ENCODE measurements at regions of chr7 and their contacts with region 1.

Region 1: GRCh38 chr7:11193131-11193811 is 219.6 kb downstream of the PHF14 start:
- DNase-seq: no peak
- H3K4me3 Mint-ChIP-seq: peak overlapping the region; percentile 81
- H3K27ac Mint-ChIP-seq: peak overlapping the region; percentile 77
- H3K4me1 Mint-ChIP-seq: peaks cover 29% of the 10 kb centered on the region
- H3K27me3 Mint-ChIP-seq: peaks cover 2% of the 10 kb centered on the region

Region 2: GRCh38 chr7:10939911-10940703 is 253.2 kb before region 1 on chr7:
- intact Hi-C with region 1: loop called (anchors 5 kb)
- DNase-seq: peak; percentile 82
- H3K4me3 Mint-ChIP-seq: no peak overlapping the region
- H3K27ac Mint-ChIP-seq: no peak overlapping the region
- H3K4me1 Mint-ChIP-seq: peaks cover 14% of the 10 kb centered on the region
- H3K27me3 Mint-ChIP-seq: no peaks in the 10 kb centered on the region

Region 3: GRCh38 chr7:11120068-11120664 is 73.1 kb before region 1 on chr7:
- intact Hi-C with region 1: loop called (anchors 2 kb)
- DNase-seq: no peak
- H3K4me3 Mint-ChIP-seq: peak overlapping the region; percentile 37
- H3K27ac Mint-ChIP-seq: peak overlapping the region; percentile 79
- H3K4me1 Mint-ChIP-seq: peaks cover 40% of the 10 kb centered on the region
- H3K27me3 Mint-ChIP-seq: no peaks in the 10 kb centered on the region

Region 4: GRCh38 chr7:11130012-11130411 is 63.3 kb before region 1 on chr7:
- intact Hi-C with region 1: loop called (anchors 2 kb)
- DNase-seq: no peak
- H3K4me3 Mint-ChIP-seq: no peak overlapping the region
- H3K27ac Mint-ChIP-seq: peak overlapping the region; percentile 72
- H3K4me1 Mint-ChIP-seq: peaks cover 56% of the 10 kb centered on the region
- H3K27me3 Mint-ChIP-seq: no peaks in the 10 kb centered on the region

Region 5: DNA sequence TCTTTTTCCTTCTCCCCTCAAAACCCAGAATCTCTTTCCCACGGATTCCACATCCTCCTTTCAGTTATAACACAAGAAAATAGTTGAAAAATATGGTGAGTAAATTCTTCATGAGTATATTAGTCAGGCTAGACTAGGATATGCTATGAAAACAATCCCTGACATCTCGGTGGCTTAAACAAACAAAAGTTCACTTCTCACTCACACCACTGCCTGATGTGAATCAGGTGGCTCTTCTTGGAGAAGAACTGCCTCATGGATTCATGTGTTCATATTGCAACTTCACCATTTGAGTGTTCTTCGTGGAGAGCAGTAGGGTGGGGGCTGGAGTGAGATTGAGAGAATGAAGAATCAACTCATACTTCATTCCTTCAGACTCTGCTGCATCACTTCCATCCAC is 15.5 kb before region 1 on chr7:
- intact Hi-C with region 1: loop called (anchors 2 kb)
- DNase-seq: no peak
- H3K4me3 Mint-ChIP-seq: no peak overlapping the region
- H3K27ac Mint-ChIP-seq: no peak overlapping the region
- H3K4me1 Mint-ChIP-seq: peaks cover 6% of the 10 kb centered on the region
- H3K27me3 Mint-ChIP-seq: no peaks in the 10 kb centered on the region

Region 6: DNA sequence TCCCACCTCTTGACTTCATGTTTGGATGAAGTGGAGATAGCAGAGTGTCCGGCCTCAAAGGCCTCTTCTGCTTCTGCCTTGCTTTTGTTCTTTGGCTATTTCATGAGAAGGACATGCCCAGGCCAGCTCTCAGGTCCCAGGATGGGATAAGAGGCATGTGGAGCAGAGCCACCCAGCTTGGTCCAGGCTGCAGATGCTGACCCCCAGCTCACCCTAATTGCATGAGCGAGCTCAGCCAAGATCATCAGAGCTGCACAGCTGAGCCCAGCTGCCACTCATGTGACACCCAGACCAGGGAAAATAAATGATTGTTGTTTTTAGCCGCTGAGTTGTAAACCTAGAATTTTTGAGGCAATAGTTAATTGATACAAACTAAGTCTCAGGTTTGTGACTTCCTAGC is 10.4 kb after region 1 on chr7:
- intact Hi-C with region 1: no loop called
- DNase-seq: no peak
- H3K4me3 Mint-ChIP-seq: no peak overlapping the region
- H3K27ac Mint-ChIP-seq: no peak overlapping the region
- H3K4me1 Mint-ChIP-seq: peaks cover 2% of the 10 kb centered on the region
- H3K27me3 Mint-ChIP-seq: no peaks in the 10 kb centered on the region

Region 7: GRCh38 chr7:11394438-11394837 is 201.2 kb after region 1 on chr7:
- intact Hi-C with region 1: no loop called
- DNase-seq: no peak
- H3K4me3 Mint-ChIP-seq: no peak overlapping the region
- H3K27ac Mint-ChIP-seq: no peak overlapping the region
- H3K4me1 Mint-ChIP-seq: no peaks in the 10 kb centered on the region
- H3K27me3 Mint-ChIP-seq: no peaks in the 10 kb centered on the region

Region 8: DNA sequence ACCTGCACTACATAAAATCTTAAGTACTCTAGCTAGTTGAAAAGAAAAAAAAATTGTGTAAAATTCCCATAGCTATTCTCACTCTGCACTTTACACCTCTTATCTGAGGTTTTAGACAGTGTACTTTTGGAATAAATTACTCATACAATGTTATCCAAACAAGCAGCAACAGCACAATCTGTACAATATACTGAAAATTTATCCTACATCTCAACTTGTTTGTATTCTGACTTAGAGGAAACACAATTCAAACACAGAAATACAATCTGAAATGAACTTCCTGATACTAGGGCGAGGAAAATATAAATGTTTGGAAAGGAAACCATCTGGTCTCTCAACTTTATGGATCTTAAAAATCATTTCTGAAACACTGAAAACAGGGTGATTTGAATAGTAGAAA is 257.0 kb after region 1 on chr7:
- intact Hi-C with region 1: no loop called
- DNase-seq: no peak
- H3K4me3 Mint-ChIP-seq: no peak overlapping the region
- H3K27ac Mint-ChIP-seq: no peak overlapping the region
- H3K4me1 Mint-ChIP-seq: no peaks in the 10 kb centered on the region
- H3K27me3 Mint-ChIP-seq: no peaks in the 10 kb centered on the region

Measured in activated T-helper 2 cell treated with anti-CD3 and anti-CD28 coated beads, Interferon-gamma antibody, Interleukin-2, Interleukin-4, amounts not matched to agents 10 μg/mL and 5 μg/mL and 100 μg/mL, durations not matched to agents 14 hours and 24 hours and 36 hours (primary cell).